ENCODE measurements at regions of chr7 and their contacts with region 1.

Region 1: GRCh38 chr7:121994625-121995410 is 121.9 kb downstream of the PTPRZ1 start:
- DNase-seq: peak in 3 of 5 donors; percentile 10 to 37 (median 24)
- ATAC-seq: peak in 3 of 4 donors; percentile 56 to 81 (median 60)
- H3K4me3 ChIP-seq: no peak overlapping the region
- H3K27ac ChIP-seq: no peak overlapping the region
- H3K4me1 ChIP-seq: no peaks in the 10 kb centered on the region
- H3K27me3 ChIP-seq: no peaks in the 10 kb centered on the region
- CTCF ChIP-seq: peak; percentile 37 to 63 (median 51)
- POLR2A ChIP-seq: no peak

Region 2: GRCh38 chr7:121605317-121605680 is 389.5 kb before region 1 on chr7:
- intact Hi-C with region 1: loop called in 2 of 10 experiments (anchors 10 kb)
- DNase-seq: no peak
- ATAC-seq: no peak
- H3K4me3 ChIP-seq: no peak overlapping the region
- H3K27ac ChIP-seq: peak overlapping the region in 1 of 12 donors; percentile 24
- H3K4me1 ChIP-seq: peaks cover 0 to 20% (median 0%) of the 10 kb centered on the region in 12 donors
- H3K27me3 ChIP-seq: no peaks in the 10 kb centered on the region
- CTCF ChIP-seq: peak in 2 of 12 donors; percentile 15
- POLR2A ChIP-seq: no peak

Region 3: GRCh38 chr7:121752706-121753105 is 242.1 kb before region 1 on chr7:
- intact Hi-C with region 1: loop called in 2 of 10 experiments (anchors 10 kb)
- DNase-seq: no peak
- ATAC-seq: no peak
- H3K4me3 ChIP-seq: no peak overlapping the region
- H3K27ac ChIP-seq: no peak overlapping the region
- H3K4me1 ChIP-seq: no peaks in the 10 kb centered on the region
- H3K27me3 ChIP-seq: peaks cover 0 to 8% (median 0%) of the 10 kb centered on the region in 9 donors
- CTCF ChIP-seq: peak in 1 of 12 donors; percentile 32
- POLR2A ChIP-seq: no peak

Region 4: DNA sequence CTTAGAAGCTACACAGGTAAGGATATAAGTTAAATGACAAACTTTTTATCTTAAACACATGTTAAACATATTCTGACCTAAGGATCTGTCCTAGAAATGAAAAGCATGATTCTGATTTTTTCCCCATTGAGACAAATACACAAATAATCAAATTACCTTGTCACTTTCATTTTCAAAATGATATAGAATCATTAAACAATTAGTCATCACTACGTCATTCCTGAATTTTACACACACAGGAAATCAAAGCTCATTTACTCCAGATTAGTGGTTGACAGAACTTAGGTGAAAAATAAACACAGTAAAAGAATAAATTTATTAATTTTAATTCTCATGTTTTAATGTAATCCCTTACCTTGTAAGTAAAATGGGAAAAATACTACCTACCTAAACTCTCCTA is 60.3 kb after region 1 on chr7:
- intact Hi-C with region 1: no loop called
- DNase-seq: no peak
- ATAC-seq: no peak
- H3K4me3 ChIP-seq: no peak overlapping the region
- H3K27ac ChIP-seq: no peak overlapping the region
- H3K4me1 ChIP-seq: no peaks in the 10 kb centered on the region
- H3K27me3 ChIP-seq: no peaks in the 10 kb centered on the region
- CTCF ChIP-seq: no peak
- POLR2A ChIP-seq: no peak